Activated CD4-positive, alpha-beta T cell treated with anti-CD3 and anti-CD28 coated beads for 36 hours (primary cell): ENCODE measurements at regions of chrX and their contacts with region 1.

Region 1: DNA sequence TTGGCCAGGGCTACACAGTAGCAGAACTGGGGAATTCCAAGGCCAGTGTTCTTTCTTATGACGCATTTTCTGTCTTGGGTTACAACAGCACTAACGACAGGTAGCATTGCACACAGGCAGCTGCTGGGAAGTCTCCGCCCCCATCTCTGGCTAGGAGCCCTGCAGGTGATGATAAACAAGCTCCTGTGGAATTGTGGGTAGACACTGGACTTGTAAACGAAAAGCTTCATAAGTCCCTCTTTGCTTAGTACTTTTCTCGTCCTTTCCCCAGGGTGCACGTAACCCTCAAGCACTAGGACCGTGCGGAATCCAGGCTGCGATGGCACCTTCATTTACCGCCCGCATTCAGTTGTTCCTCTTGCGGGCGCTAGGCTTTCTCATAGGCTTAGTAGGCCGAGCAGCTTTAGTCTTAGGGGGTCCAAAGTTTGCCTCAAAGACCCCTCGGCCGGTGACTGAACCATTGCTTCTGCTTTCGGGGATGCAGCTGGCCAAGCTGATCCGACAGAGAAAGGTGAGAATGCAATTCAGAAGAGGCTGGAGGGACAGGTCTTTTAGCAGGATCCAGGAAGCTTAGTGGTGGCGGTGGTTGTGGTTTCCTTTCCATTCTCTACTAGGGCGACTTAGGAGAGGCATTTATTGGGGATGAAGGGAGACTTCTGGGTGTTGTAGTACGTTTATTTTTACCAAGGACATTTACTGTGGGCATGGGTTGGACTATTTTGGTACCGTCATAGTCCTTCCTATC is at the start of gene FAAH2:
- DNase-seq: peak; percentile 79
- ATAC-seq: peak; percentile 81
- H3K4me3 Mint-ChIP-seq: peak within 1 kb of the TSS; percentile 88
- H3K27ac Mint-ChIP-seq: peak within 1 kb of the TSS; percentile 93
- H3K4me1 Mint-ChIP-seq: peaks cover 37% of the 10 kb centered on the region
- H3K27me3 Mint-ChIP-seq: no peaks in the 10 kb centered on the region
- total RNA-seq, gene FAAH2: 4.9 to 8.1 TPM

Region 2: DNA sequence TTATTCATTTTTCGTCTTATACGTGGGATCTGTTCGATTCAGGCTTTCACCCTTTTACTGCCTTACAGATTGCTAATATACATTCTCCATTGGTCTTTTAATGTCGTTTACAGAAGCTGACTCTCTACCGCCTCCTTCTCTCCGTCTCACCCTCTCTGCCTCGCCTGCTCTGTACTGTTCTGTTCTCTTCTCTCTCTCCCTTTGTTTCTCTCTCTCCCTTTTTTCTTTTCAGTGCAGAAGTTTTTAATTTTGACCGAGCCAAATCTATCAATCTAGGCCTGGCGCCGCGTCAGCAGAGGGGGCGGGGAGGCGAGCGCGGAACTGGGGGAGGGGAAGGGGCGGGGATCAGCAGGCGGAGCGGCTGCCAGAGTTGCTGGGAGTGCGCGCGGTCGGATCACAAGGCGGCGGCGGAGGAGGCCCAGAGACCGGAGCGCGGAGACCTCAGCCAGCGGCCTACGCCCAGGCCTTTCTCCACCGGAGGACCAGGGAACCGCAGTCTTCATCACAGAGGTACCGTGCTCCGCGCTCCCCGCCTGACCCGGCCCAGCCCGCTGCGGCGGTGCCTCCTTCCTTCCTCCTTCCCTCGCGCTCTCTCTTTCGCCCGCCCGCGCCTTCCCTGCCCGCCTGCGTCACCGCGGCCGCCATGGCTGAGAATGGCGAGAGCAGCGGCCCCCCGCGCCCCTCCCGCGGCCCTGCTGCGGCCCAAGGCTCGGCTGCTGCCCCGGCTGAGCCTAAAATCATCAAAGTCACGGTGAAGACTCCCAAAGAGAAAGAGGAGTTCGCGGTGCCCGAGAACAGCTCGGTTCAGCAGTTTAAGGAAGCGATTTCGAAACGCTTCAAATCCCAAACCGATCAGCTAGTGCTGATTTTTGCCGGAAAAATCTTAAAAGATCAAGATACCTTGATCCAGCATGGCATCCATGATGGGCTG is 723.2 kb before region 1 on chrX and contains the start of gene UBQLN2:
- CTCF ChIA-PET with region 1: no interaction called
- POLR2A ChIA-PET with region 1: no interaction called
- intact Hi-C with region 1: loop called in 1 of 2 experiments (anchors 5 kb)
- DNase-seq: peak; percentile 90
- ATAC-seq: peak; percentile 69
- H3K4me3 Mint-ChIP-seq: peak within 1 kb of the TSS; percentile 96
- H3K27ac Mint-ChIP-seq: peak within 1 kb of the TSS; percentile 100
- H3K4me1 Mint-ChIP-seq: peaks cover 2% of the 10 kb centered on the region
- H3K27me3 Mint-ChIP-seq: no peaks in the 10 kb centered on the region
- total RNA-seq, gene UBQLN2: 32.2 to 36.6 TPM

Region 3: GRCh38 chrX:57121162-57121741 is 165.4 kb before region 1 on chrX and contains the start of gene SPIN2B:
- CTCF ChIA-PET with region 1: no interaction called
- POLR2A ChIA-PET with region 1: no interaction called
- intact Hi-C with region 1: loop called in 1 of 2 experiments (anchors 1 kb)
- DNase-seq: peak; percentile 89
- ATAC-seq: peak; percentile 100
- H3K4me3 Mint-ChIP-seq: peak within 1 kb of the TSS; percentile 85
- H3K27ac Mint-ChIP-seq: peak within 1 kb of the TSS; percentile 90
- H3K4me1 Mint-ChIP-seq: peaks cover 10% of the 10 kb centered on the region
- H3K27me3 Mint-ChIP-seq: no peaks in the 10 kb centered on the region
- total RNA-seq, gene SPIN2B: 6.1 to 7.0 TPM

Region 4: GRCh38 chrX:57313583-57314215 is 27.0 kb after region 1 on chrX:
- CTCF ChIA-PET with region 1: no interaction called
- POLR2A ChIA-PET with region 1: no interaction called
- intact Hi-C with region 1: no loop called
- DNase-seq: no peak
- ATAC-seq: no peak
- H3K4me3 Mint-ChIP-seq: no peak overlapping the region
- H3K27ac Mint-ChIP-seq: no peak overlapping the region
- H3K4me1 Mint-ChIP-seq: peaks cover 17% of the 10 kb centered on the region
- H3K27me3 Mint-ChIP-seq: no peaks in the 10 kb centered on the region

Region 5: GRCh38 chrX:57380026-57380796 is 93.5 kb after region 1 on chrX:
- CTCF ChIA-PET with region 1: no interaction called
- POLR2A ChIA-PET with region 1: no interaction called
- intact Hi-C with region 1: loop called (anchors 2 to 5 kb)
- DNase-seq: no peak
- ATAC-seq: peak; percentile 71
- H3K4me3 Mint-ChIP-seq: no peak overlapping the region
- H3K27ac Mint-ChIP-seq: peak overlapping the region; percentile 42
- H3K4me1 Mint-ChIP-seq: peaks cover 13% of the 10 kb centered on the region
- H3K27me3 Mint-ChIP-seq: no peaks in the 10 kb centered on the region

Region 6: DNA sequence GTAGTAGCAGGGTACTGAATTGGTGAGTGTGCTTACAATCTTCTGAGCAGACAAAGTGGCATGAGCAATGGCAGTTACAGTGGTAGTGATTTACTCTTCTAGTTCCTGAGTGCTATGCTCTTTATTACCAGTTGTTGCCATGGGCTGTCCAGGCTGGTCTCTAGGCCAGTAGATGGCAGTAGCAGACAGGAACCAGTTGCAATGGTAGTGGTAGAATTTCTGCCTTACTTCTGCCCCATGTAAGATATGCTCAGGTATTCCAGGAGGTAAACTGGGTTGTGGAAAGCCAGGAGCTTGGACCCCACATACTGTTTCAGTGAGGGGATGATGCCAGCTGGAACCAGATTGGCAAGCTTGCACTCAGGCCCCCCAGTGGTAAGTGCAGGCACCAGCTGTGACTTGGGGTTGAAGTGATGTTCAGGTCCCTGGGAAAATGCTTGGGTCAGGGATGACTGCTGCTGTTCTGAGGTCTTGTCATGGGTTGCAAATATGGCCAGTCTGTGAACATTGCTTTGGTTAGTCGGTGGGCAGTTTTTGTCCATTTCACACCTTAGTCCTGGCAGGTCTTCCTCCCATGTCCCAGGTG is 242.1 kb after region 1 on chrX:
- CTCF ChIA-PET with region 1: no interaction called
- POLR2A ChIA-PET with region 1: no interaction called
- intact Hi-C with region 1: loop called in 1 of 2 experiments (anchors 10 kb)
- DNase-seq: peak; percentile 25
- ATAC-seq: no peak
- H3K4me3 Mint-ChIP-seq: no peak overlapping the region
- H3K27ac Mint-ChIP-seq: no peak overlapping the region
- H3K4me1 Mint-ChIP-seq: no peaks in the 10 kb centered on the region
- H3K27me3 Mint-ChIP-seq: no peaks in the 10 kb centered on the region

Region 7: GRCh38 chrX:57918750-57919436 is 632.2 kb after region 1 on chrX:
- CTCF ChIA-PET with region 1: no interaction called
- POLR2A ChIA-PET with region 1: no interaction called
- intact Hi-C with region 1: loop called in 1 of 2 experiments (anchors 5 kb)
- DNase-seq: peak; percentile 34
- ATAC-seq: peak; percentile 39
- H3K4me3 Mint-ChIP-seq: no peak overlapping the region
- H3K27ac Mint-ChIP-seq: no peak overlapping the region
- H3K4me1 Mint-ChIP-seq: no peaks in the 10 kb centered on the region
- H3K27me3 Mint-ChIP-seq: no peaks in the 10 kb centered on the region